ENCODE measurements at regions of chr1 and their contacts with region 1.

Region 1: GRCh38 chr1:167517535-167518330 is 596 bp downstream of the CD247 start:
- DNase-seq: peak; percentile 93
- ATAC-seq: peak; percentile 90
- H3K4me3 Mint-ChIP-seq: peak overlapping the region; percentile 94
- H3K27ac Mint-ChIP-seq: peak overlapping the region; percentile 98
- H3K4me1 Mint-ChIP-seq: peaks cover 41% of the 10 kb centered on the region
- H3K27me3 Mint-ChIP-seq: peaks cover 4% of the 10 kb centered on the region

Region 2: DNA sequence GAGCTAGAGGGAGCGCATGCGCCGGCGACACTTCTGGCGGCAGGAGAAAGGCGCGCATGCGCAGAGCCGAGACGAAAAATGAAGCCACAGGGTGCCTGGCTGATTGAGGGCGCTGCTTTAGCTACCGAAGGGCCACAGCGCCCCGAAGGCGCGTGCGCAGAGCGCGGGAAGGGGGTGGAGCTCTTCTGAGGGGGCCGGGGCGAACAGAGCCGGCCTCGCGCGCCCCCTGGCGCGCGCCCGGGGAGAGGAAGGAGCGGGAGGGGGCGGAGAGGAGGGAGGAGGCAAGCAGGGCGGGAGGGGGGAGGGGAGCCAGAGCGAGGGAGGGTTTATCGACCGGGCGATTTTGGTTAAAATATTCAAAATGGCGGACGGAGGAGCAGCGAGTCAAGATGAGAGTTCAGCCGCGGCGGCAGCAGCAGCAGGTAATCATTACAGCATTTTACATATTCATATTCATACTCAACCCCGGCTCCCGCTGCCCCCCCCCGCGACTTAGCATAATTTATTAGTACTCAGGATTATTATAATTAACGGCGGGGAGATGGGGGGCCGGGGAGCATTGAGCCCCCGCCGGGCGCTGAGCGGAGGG is 297.1 kb before region 1 on chr1 and contains the start of gene POU2F1:
- CTCF ChIA-PET with region 1: interaction called, 12 read pairs
- DNase-seq: peak; percentile 99
- ATAC-seq: peak; percentile 86
- H3K4me3 Mint-ChIP-seq: peak within 1 kb of the TSS; percentile 86
- H3K27ac Mint-ChIP-seq: peak within 1 kb of the TSS; percentile 94
- H3K4me1 Mint-ChIP-seq: peaks cover 38% of the 10 kb centered on the region
- H3K27me3 Mint-ChIP-seq: no peaks in the 10 kb centered on the region
- total RNA-seq, gene POU2F1: 20.7 to 24.6 TPM

Region 3: GRCh38 chr1:167447521-167448136 is 70.1 kb before region 1 on chr1:
- CTCF ChIA-PET with region 1: interaction called, 12 read pairs
- DNase-seq: peak; percentile 86
- ATAC-seq: peak; percentile 81
- H3K4me3 Mint-ChIP-seq: peak overlapping the region; percentile 53
- H3K27ac Mint-ChIP-seq: peak overlapping the region; percentile 93
- H3K4me1 Mint-ChIP-seq: peaks cover 86% of the 10 kb centered on the region
- H3K27me3 Mint-ChIP-seq: no peaks in the 10 kb centered on the region

Region 4: DNA sequence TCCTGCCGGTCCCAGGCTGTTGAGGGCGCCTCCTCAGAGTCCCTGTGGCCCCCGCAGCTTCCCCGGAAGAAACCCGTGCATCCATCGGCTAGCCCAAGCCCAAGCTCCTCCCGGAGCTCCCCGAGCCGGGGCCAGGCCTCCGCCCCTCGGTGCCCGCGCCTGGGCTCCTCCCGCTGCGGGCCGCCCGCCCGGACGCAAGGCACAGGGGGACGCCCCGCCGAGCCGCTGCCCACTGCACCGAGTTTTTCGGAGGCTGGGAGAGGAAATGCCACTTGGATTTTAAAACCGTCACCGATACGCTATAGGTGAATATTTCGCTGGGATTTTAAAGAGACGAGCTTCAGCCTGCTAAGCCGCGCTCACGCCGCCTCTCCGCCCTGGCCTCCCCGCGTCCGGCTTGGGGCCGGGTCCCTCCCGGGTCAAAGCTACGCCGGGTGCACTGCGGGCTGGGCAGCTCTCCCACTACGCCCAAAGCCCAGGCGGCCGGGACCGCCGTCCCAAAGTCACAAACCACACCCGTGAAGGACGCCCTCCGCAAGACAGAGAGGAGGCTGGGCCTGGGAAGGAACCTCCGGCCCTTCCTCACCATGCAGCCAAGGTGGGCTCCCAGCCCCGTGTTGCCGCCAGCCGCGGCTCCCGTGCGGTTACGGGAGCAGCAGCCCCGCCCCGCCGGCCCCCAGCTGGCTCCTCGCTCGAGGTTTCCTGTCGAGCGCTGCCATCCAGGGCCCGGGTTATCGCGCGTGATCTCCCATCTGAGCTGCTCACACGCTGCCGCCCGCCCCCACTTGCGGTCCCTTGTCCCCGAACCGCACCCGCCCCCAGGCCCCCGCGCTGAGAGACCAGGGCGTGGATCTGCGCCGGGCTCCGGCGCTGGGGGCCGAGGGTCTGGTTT is 62.6 kb before region 1 on chr1:
- CTCF ChIA-PET with region 1: interaction called, 45 read pairs
- DNase-seq: peak; percentile 87
- ATAC-seq: peak; percentile 70
- H3K4me3 Mint-ChIP-seq: peak overlapping the region; percentile 78
- H3K27ac Mint-ChIP-seq: peak overlapping the region; percentile 56
- H3K4me1 Mint-ChIP-seq: peaks cover 62% of the 10 kb centered on the region
- H3K27me3 Mint-ChIP-seq: no peaks in the 10 kb centered on the region

Region 5: DNA sequence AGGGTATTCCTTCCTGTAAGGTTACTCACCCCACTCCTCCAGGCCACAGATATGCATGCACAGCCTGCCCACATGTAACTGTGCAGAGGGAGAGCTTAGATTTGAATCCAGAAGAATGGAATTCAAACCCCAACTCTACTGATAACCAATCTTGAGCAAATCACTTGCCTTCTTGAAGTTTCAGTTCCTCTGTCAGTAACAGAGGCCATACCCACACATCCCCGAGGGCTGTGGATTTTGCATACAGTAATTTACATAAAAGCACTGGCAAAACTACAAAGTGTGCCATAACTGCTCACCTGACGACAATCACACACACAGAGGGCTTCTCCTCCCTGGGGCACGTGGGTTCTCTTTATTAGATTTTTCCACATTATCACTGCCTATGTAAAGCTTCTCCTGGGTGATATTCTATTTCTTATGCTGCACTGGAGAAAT is 18.1 kb before region 1 on chr1:
- CTCF ChIA-PET with region 1: interaction called, 63 read pairs
- DNase-seq: peak; percentile 60
- ATAC-seq: peak; percentile 54
- H3K4me3 Mint-ChIP-seq: peak overlapping the region; percentile 34
- H3K27ac Mint-ChIP-seq: peak overlapping the region; percentile 81
- H3K4me1 Mint-ChIP-seq: peaks cover 93% of the 10 kb centered on the region
- H3K27me3 Mint-ChIP-seq: no peaks in the 10 kb centered on the region